Activated CD4-positive, alpha-beta T cell treated with anti-CD3 and anti-CD28 coated beads for 36 hours (primary cell): ENCODE measurements at regions of chr4 and their contacts with region 1.

Region 1: DNA sequence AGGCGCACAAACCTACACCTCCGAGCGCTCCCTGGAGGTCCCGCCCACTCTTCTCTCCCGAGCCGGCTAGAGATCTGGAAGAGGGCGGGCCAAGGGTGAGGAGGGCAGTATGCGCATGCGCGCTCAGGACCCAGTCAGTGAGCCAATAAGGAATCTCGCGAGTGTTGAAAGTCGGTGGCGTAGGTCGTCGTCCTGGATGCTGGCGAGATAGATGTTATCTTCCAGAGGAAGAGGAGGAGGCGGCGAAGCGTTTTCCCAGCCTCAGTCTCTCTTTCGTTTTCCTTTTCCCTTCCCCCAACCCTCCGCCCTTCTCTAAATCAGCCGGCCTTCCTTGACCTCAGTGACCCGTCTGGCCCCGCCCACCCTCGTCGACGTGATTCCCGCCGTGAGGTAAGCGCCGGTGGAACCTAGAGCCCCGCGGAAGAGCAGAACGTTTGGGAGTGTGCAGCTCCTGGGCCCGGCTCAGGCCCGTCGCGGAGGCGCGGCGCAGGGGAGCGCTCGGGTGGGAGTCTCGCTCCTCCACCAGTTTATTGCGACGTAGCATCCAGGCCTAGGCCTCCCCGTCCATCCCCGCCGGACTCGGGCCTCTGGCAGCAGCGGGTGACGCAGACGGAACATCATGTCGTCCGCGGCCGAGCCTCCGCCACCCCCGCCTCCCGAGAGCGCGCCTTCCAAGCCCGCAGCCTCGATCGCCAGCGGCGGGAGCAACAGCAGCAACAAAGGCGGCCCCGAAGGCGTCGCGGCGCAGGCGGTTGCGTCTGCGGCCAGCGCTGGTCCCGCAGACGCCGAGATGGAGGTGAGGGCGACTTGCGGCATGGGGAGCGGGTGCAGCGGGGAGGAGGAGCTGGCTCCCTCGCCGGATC is at the start of gene SMARCA5:
- DNase-seq: peak; percentile 97
- ATAC-seq: peak; percentile 85
- H3K4me3 Mint-ChIP-seq: peak within 1 kb of the TSS; percentile 100
- H3K27ac Mint-ChIP-seq: peak within 1 kb of the TSS; percentile 99
- H3K4me1 Mint-ChIP-seq: peaks cover 29% of the 10 kb centered on the region
- H3K27me3 Mint-ChIP-seq: no peaks in the 10 kb centered on the region
- total RNA-seq, gene SMARCA5: 66.6 to 69.8 TPM

Region 2: DNA sequence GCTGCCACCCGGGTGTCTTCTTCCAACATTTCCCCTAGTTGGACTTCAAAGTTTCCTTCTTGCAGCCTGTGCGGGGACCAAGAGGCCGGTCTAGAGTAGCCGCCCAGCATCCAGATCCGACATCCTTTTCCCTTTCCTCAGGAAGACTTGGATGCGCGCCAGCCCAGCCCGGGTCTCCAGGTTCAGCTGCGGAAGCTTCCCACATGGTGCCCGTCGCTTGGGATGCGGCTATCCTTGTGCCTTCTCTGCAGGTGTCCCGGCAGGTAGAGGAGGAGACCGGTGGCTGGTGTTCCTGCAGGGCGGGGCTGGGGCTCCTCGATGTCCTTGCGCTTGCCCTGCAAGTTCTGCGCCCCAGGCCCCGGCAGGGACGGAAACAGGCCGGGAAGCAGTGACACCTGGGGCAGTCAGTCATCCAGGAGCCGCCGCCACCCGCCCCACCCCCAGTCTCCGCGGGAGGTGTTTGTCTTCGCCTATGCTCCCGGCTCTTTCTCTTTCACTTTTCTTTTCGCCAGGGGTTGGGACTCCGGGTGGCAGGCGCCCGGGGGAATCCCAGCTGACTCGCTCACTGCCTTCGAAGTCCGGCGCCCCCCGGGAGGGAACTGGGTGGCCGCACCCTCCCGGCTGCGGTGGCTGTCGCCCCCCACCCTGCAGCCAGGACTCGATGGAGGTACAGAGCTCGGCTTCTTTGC is 1877.3 kb before region 1 on chr4 and contains the start of gene IL15:
- CTCF ChIA-PET with region 1: no interaction called
- POLR2A ChIA-PET with region 1: no interaction called
- intact Hi-C with region 1: loop called in 1 of 2 experiments (anchors 5 kb)
- DNase-seq: peak; percentile 85
- ATAC-seq: peak; percentile 90
- H3K4me3 Mint-ChIP-seq: peak within 1 kb of the TSS; percentile 86
- H3K27ac Mint-ChIP-seq: peak within 1 kb of the TSS; percentile 67
- H3K4me1 Mint-ChIP-seq: peaks cover 18% of the 10 kb centered on the region
- H3K27me3 Mint-ChIP-seq: peaks cover 20% of the 10 kb centered on the region
- total RNA-seq, gene IL15: 0.37 to 1.1 TPM

Region 3: DNA sequence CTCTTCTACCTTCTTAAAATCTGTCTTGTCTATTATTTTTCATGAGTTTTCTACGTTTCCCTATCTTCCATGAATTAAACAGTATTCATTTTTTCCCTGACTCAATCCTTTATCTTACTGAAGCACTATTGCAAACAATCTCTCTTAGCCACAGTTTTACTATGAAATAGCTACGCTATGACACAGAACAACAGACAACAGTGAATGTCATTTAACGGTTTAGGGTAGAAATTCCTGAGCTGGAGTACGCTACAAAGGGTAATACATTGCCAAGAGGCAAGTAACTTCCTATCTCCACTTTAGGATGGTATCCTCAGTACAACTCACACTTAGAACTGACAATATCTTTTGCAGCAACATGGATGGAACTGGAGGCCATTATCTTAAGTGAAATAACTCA is 1220.0 kb before region 1 on chr4:
- CTCF ChIA-PET with region 1: no interaction called
- POLR2A ChIA-PET with region 1: no interaction called
- intact Hi-C with region 1: loop called in 1 of 2 experiments (anchors 2 kb)
- DNase-seq: no peak
- ATAC-seq: no peak
- H3K4me3 Mint-ChIP-seq: no peak overlapping the region
- H3K27ac Mint-ChIP-seq: peak overlapping the region; percentile 3
- H3K4me1 Mint-ChIP-seq: peaks cover 67% of the 10 kb centered on the region
- H3K27me3 Mint-ChIP-seq: no peaks in the 10 kb centered on the region

Region 4: DNA sequence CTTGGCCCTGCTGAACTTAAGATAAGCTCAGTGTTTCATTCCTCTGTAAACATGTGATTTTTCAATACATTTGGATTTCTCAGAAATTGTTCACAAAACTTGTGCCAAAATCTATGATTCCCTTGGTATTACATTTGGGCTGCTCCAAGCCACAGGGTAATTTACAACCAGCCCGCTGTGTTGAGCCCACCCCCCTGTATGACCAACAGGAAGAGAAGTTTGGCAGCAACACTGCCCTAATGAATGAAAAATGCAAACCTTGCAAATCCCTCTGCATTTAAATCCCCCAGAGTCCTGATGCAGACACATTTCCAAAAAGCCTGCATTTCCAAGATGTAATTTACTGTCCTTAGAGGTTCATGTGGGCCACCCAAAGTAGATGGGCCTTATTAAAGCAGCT is 211.0 kb before region 1 on chr4:
- CTCF ChIA-PET with region 1: no interaction called
- POLR2A ChIA-PET with region 1: no interaction called
- intact Hi-C with region 1: no loop called
- DNase-seq: no peak
- ATAC-seq: no peak
- H3K4me3 Mint-ChIP-seq: no peak overlapping the region
- H3K27ac Mint-ChIP-seq: no peak overlapping the region
- H3K4me1 Mint-ChIP-seq: no peaks in the 10 kb centered on the region
- H3K27me3 Mint-ChIP-seq: no peaks in the 10 kb centered on the region

Region 5: GRCh38 chr4:143335979-143336780 is 177.4 kb before region 1 on chr4:
- CTCF ChIA-PET with region 1: no interaction called
- POLR2A ChIA-PET with region 1: no interaction called
- intact Hi-C with region 1: loop called in 1 of 2 experiments (anchors 2 kb)
- DNase-seq: peak; percentile 46
- ATAC-seq: peak; percentile 51
- H3K4me3 Mint-ChIP-seq: peak overlapping the region; percentile 76
- H3K27ac Mint-ChIP-seq: no peak overlapping the region
- H3K4me1 Mint-ChIP-seq: peaks cover 8% of the 10 kb centered on the region
- H3K27me3 Mint-ChIP-seq: peaks cover 36% of the 10 kb centered on the region

Region 6: GRCh38 chr4:143358923-143359643 is 154.5 kb before region 1 on chr4:
- CTCF ChIA-PET with region 1: no interaction called
- POLR2A ChIA-PET with region 1: no interaction called
- intact Hi-C with region 1: loop called (anchors 1 kb)
- DNase-seq: peak; percentile 69
- ATAC-seq: peak; percentile 88
- H3K4me3 Mint-ChIP-seq: peak overlapping the region; percentile 17
- H3K27ac Mint-ChIP-seq: peak overlapping the region; percentile 90
- H3K4me1 Mint-ChIP-seq: peaks cover 27% of the 10 kb centered on the region
- H3K27me3 Mint-ChIP-seq: no peaks in the 10 kb centered on the region

Region 7: DNA sequence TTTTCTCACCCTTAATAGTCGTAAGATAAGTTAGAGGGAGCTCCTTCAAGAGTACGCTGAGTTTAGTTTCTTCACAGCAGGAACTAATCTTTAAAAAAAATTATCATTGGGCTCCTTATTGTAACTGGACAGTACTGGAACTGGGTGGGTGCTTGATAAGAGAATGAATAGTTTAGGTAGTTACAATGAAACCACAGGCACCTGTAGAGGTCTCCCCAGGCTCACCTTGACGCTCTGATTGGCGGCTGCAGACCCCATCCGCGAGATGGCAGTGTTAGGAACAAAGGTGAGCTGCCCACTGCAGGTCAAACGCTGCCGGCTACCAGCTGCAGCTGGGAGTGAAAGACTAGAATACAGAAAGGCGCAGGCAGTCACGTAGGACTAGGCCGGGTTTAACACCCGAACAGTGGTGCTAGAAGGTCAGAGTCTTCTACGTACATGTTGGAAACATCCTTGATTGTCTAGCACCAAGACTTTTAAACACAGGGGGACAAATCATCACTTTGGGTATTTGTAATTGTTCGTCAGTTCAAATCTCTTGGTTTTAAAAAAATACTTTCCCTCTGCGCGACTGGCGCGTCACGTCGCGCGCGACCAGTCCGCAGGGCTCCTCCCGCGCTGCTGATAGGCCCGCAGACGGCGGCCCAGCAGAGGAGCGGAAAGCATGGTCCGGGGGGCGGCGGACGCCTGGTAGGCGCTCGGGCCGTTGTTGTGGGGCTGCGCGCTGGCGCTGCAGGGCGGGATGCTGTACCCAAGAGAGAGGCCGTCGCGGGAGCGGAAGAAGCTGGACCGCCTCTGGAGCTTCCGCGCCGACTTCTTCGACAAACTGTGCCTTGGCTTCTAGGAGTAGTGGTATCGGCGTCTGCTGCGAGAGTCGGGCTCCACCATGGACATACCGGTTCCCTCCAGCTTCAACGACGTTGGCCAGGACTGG is 45.6 kb after region 1 on chr4:
- CTCF ChIA-PET with region 1: interaction called, 5 read pairs
- POLR2A ChIA-PET with region 1: no interaction called
- intact Hi-C with region 1: loop called in 1 of 2 experiments (anchors 2 kb)
- DNase-seq: peak; percentile 78
- ATAC-seq: peak; percentile 82
- H3K4me3 Mint-ChIP-seq: peak overlapping the region; percentile 85
- H3K27ac Mint-ChIP-seq: peak overlapping the region; percentile 93
- H3K4me1 Mint-ChIP-seq: peaks cover 29% of the 10 kb centered on the region
- H3K27me3 Mint-ChIP-seq: no peaks in the 10 kb centered on the region